GM12878 (cell line): ENCODE measurements at regions of chr11 and their contacts with region 1.

Region 1: DNA sequence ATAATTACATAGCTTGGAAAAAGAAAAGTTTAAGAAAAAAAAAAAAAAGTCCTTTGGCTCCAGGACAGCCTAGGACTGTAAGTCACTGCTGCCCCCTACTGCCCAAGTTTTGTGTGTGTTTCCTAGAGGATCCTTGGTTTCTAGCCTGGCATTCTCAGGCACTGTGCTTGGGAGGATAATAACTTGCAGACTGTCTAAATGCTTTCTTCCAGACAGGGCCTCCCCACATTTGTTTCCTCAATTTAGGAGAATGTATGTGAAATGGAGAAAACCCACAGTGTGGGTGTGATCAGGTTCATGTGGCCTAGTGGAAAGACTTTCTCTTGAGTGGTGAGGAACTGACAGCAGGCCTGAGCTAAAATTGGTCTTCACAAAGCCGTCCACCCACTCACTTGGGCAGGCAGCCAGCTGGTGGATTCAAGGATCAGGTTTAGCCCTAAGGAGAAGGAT is 191.0 kb downstream of the NAV2 start:
- DNase-seq: peak; percentile 3
- ATAC-seq: peak; percentile 78
- H3K4me3 ChIP-seq: no peak overlapping the region
- H3K27ac ChIP-seq: no peak overlapping the region
- H3K4me1 ChIP-seq: no peaks in the 10 kb centered on the region
- H3K27me3 ChIP-seq: no peaks in the 10 kb centered on the region
- CTCF ChIP-seq: peak; percentile 77 to 87 (median 78)
- EP300 ChIP-seq: no peak
- POLR2A ChIP-seq: no peak
- RAD21 ChIP-seq: peak; percentile 94

Region 2: DNA sequence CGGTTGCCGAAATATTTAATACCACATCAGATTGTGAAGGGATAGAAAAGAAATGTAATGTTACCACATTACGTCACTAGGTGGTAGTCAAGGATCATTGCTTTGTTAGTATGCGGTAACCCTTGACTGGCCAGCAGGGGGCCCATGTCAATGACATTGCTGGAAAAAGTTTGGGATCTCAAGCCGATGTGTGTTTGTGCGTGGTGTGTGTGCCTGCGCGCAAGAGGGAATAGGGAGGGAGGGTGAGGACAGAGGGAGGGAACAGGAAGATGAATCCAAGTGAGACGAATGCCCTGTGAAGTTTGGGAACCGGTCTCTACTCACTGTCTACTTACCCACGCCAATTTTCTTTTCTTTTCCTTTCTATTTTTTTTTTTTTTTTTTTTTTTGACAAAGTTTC is 832.4 kb before region 1 on chr11:
- CTCF ChIA-PET with region 1: interaction called, 5 read pairs
- POLR2A ChIA-PET with region 1: no interaction called
- RAD21 ChIA-PET with region 1: no interaction called
- SMC1A ChIA-PET with region 1: interaction called, 4 read pairs
- in situ Hi-C with region 1: loop called (anchors 10 kb)
- intact Hi-C with region 1: loop called (anchors 10 kb)
- DNase-seq: peak; percentile 48
- ATAC-seq: peak; percentile 96
- H3K4me3 ChIP-seq: no peak overlapping the region
- H3K27ac ChIP-seq: no peak overlapping the region
- H3K4me1 ChIP-seq: no peaks in the 10 kb centered on the region
- H3K27me3 ChIP-seq: peaks cover 0 to 2% of the 10 kb centered on the region in 2 experiments; a peak in 2 of 4 replicates
- CTCF ChIP-seq: peak; percentile 93 to 99 (median 99)
- EP300 ChIP-seq: no peak
- POLR2A ChIP-seq: no peak
- RAD21 ChIP-seq: peak; percentile 85

Region 3: DNA sequence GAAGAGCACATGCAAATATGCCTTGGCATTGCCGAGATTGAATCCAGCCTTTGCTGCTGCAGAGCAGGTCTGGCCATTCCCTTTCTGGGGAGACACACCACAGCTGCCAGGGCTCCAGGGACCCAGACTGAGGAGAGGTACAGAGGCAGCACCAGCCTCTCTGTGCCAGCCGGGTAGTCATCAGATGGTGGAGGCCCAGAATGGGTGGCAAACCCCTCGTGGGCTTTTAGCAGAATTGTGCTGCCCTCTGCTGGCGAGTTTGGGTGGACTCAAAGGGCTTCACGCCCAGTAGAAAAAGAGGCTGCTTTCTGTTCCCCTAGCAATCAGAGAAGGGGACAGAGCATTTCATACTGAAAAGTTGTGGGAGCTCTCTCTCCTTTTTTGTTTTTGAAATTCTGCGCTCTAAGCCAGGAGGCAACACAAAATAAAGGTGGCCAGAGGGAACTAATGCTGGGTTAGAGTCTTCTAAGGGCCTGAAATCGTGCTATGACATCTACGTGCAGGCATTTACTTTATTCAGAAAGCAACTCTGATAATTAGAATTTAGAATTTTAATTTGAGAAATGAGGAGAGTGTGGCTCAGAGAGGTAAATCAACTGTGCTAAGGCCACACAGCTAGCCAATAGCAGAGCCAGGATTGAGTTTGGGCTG is 349.8 kb before region 1 on chr11:
- CTCF ChIA-PET with region 1: interaction called, 52 read pairs
- POLR2A ChIA-PET with region 1: no interaction called
- RAD21 ChIA-PET with region 1: interaction called, 35 read pairs
- SMC1A ChIA-PET with region 1: interaction called, 22 read pairs
- in situ Hi-C with region 1: no loop called
- intact Hi-C with region 1: loop called (anchors 1 kb)
- DNase-seq: no peak
- ATAC-seq: peak; percentile 94
- H3K4me3 ChIP-seq: no peak overlapping the region
- H3K27ac ChIP-seq: no peak overlapping the region
- H3K4me1 ChIP-seq: peaks cover 13% of the 10 kb centered on the region
- H3K27me3 ChIP-seq: no peaks in the 10 kb centered on the region; a peak in 1 of 4 replicates
- CTCF ChIP-seq: peak; percentile 77 to 94 (median 82)
- EP300 ChIP-seq: no peak
- POLR2A ChIP-seq: no peak
- RAD21 ChIP-seq: peak; percentile 97

Region 4: DNA sequence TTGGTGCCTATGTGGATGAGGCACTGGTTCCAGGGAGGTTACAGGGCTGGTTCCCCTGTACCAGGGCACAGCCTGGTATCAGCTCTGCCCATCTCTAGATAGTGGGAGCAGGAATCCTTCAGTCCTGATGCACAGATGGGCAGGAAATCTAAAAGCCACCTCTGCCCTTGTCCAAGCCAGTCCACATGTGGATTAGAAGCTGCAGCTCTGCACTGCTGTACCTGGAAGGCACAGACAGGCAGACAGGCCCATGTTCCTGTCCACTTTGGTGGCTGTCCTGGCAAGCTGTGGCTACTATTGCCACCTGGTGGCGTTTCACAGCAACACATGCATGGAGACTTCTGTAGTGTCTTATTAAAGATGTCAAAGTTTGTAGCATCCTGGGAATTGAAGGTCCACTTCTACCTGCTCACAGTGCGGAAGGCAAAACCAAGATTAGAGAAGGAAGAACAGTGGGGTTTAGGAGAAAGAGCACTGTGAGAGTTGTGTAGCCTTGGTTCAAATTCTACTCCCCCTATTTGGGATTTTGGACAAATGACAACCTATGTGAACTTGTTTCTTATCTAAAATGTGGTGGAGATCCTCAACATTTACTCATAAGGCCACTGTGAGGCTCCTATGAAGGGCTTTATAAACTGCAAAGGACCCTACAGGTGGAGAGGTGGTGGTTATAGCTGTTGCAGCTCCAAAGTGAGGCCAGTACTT is 160.9 kb before region 1 on chr11:
- CTCF ChIA-PET with region 1: interaction called, 18 read pairs
- POLR2A ChIA-PET with region 1: no interaction called
- RAD21 ChIA-PET with region 1: interaction called, 4 read pairs
- SMC1A ChIA-PET with region 1: interaction called, 11 read pairs
- in situ Hi-C with region 1: no loop called
- intact Hi-C with region 1: loop called (anchors 1 kb)
- DNase-seq: no peak
- ATAC-seq: peak; percentile 99
- H3K4me3 ChIP-seq: no peak overlapping the region
- H3K27ac ChIP-seq: no peak overlapping the region
- H3K4me1 ChIP-seq: no peaks in the 10 kb centered on the region
- H3K27me3 ChIP-seq: no peaks in the 10 kb centered on the region
- CTCF ChIP-seq: peak; percentile 74 to 80 (median 75)
- EP300 ChIP-seq: no peak
- POLR2A ChIP-seq: no peak
- RAD21 ChIP-seq: peak; percentile 85

Region 5: DNA sequence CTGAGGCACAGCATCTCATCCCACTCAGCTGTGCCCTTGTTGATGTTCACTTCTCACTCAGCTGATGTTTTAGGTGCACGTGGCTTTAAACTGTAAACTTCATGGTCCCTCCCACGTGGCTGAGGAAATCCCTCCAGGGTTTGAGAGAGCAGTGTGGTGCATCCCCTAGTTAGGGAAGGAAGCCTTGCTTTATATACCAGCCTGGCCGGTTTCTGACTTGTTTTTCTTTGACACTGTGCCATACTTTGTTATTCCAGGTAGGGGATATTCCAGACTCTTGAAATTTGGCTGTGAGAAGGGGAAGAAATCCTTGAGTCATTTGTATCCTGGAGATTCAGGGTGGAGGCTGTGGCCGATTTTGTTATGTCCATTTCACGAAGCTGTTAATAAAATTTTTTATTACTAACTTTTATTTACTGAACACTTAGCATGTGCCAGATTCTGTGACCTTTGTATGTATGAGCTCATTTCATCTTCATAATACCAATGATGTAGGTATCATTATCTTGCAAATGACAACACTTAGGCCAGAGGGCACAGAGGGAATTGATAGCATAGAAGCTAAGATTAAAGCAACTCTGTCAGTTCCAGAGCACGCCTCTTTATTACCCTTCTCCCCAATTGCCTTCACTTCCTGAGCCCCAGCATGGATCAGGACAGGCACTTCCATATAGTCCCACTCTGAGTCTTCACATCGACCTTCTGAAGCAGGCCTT is 74.4 kb before region 1 on chr11:
- CTCF ChIA-PET with region 1: interaction called, 11 read pairs
- POLR2A ChIA-PET with region 1: no interaction called
- RAD21 ChIA-PET with region 1: interaction called, 4 read pairs
- SMC1A ChIA-PET with region 1: no interaction called
- in situ Hi-C with region 1: no loop called
- intact Hi-C with region 1: no loop called
- DNase-seq: no peak
- ATAC-seq: peak; percentile 75
- H3K4me3 ChIP-seq: no peak overlapping the region
- H3K27ac ChIP-seq: no peak overlapping the region
- H3K4me1 ChIP-seq: peaks cover 7% of the 10 kb centered on the region; the same call in 1 of the 2 replicates
- H3K27me3 ChIP-seq: no peaks in the 10 kb centered on the region
- CTCF ChIP-seq: no peak
- EP300 ChIP-seq: no peak
- POLR2A ChIP-seq: no peak
- RAD21 ChIP-seq: no peak

Region 6: GRCh38 chr11:19849107-19849789 is 54.4 kb before region 1 on chr11:
- CTCF ChIA-PET with region 1: no interaction called
- POLR2A ChIA-PET with region 1: no interaction called
- RAD21 ChIA-PET with region 1: no interaction called
- SMC1A ChIA-PET with region 1: no interaction called
- in situ Hi-C with region 1: no loop called
- intact Hi-C with region 1: no loop called
- DNase-seq: no peak
- ATAC-seq: no peak
- H3K4me3 ChIP-seq: no peak overlapping the region
- H3K27ac ChIP-seq: no peak overlapping the region
- H3K4me1 ChIP-seq: no peaks in the 10 kb centered on the region
- H3K27me3 ChIP-seq: no peaks in the 10 kb centered on the region
- CTCF ChIP-seq: no peak
- EP300 ChIP-seq: no peak
- POLR2A ChIP-seq: no peak
- RAD21 ChIP-seq: no peak

Region 7: DNA sequence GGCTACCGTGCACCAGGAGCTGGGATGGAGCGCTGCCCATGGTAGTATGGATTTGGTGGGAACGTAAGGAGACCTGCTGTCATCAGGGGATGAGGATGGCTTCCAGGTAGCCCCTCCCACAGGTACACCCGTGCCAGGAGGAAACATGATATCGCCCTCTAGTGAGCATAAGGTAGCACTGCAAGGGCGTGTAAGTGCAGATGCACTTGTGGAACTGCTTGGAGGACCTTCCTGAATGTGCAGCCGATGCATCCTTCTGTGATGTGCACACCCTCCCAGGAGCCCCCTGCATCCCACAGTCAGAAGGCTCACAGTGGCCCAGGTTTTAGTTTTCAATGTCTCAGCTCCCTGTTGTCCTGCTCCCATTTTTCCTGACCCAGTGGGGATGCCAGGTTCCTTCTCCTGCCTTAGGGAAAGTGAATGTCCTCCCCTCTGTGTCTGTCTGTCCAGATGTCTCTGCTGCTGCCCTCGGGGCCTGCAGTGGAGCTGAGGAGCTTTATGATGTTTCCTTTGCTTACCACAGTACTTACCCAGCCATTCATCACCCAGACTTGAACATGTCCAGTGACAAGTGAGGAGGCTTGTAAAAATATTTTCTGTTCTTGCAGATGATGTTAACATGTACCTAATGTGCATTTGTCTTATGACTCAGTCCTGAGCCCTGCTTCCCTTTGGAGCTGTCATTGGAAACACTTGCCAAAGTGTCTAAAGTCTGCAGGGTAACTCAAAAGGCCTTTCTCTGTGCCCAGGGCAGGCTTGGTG is 207.4 kb after region 1 on chr11:
- CTCF ChIA-PET with region 1: interaction called, 5 read pairs
- POLR2A ChIA-PET with region 1: no interaction called
- RAD21 ChIA-PET with region 1: interaction called, 3 read pairs
- SMC1A ChIA-PET with region 1: no interaction called
- in situ Hi-C with region 1: no loop called
- intact Hi-C with region 1: loop called (anchors 1 kb)
- DNase-seq: peak; percentile 8
- ATAC-seq: peak; percentile 97
- H3K4me3 ChIP-seq: no peak overlapping the region
- H3K27ac ChIP-seq: no peak overlapping the region
- H3K4me1 ChIP-seq: no peaks in the 10 kb centered on the region; the same call in 1 of the 2 replicates
- H3K27me3 ChIP-seq: no peaks in the 10 kb centered on the region
- CTCF ChIP-seq: peak; percentile 90 to 94 (median 94); a peak in 5 of 6 replicates
- EP300 ChIP-seq: no peak
- POLR2A ChIP-seq: no peak
- RAD21 ChIP-seq: peak; percentile 83